ENCODE measurements at regions of chr6 and their contacts with region 1.

Region 1: GRCh38 chr6:52399511-52400312 is 20.4 kb upstream of the EFHC1 start:
- DNase-seq: no peak
- ATAC-seq: no peak

Region 2: GRCh38 chr6:52284460-52285176 is 115.1 kb before region 1 on chr6 and contains the start of gene MCM3:
- intact Hi-C with region 1: loop called (anchors 2 kb)
- DNase-seq: peak; percentile 97
- ATAC-seq: peak; percentile 100
- total RNA-seq, gene MCM3: 21.7 TPM

Region 3: GRCh38 chr6:52361945-52362442 is 37.7 kb before region 1 on chr6 and contains the start of gene PAQR8:
- intact Hi-C with region 1: loop called (anchors 5 kb)
- DNase-seq: peak; percentile 90
- ATAC-seq: peak; percentile 98
- total RNA-seq, gene PAQR8: 1.9 TPM

Region 4: GRCh38 chr6:52697903-52698302 is 298.2 kb after region 1 on chr6:
- intact Hi-C with region 1: no loop called
- DNase-seq: no peak
- ATAC-seq: no peak